Dorsolateral prefrontal cortex (tissue), 120 donors: ENCODE measurements at regions of chr16 and their contacts with region 1.

Region 1: GRCh38 chr16:30761928-30762810 is at the starts of genes CFAP119 and RNF40:
- DNase-seq: peak; percentile 92 to 98 (median 97)
- H3K4me3 ChIP-seq: peak within 1 kb of the TSS; percentile 66 to 99 (median 90)
- H3K27ac ChIP-seq: peak within 1 kb of the TSS in 58 of 59 donors; percentile 36 to 96 (median 86)
- H3K27me3 ChIP-seq: no peaks in the 10 kb centered on the region
- CTCF ChIP-seq: peak in 33 of 56 donors; percentile 4 to 48 (median 22)
- total RNA-seq, gene CFAP119: 3.6 to 27.3 (median 12.7) TPM
- total RNA-seq, gene RNF40: 72.0 to 128 (median 95.4) TPM

Region 2: DNA sequence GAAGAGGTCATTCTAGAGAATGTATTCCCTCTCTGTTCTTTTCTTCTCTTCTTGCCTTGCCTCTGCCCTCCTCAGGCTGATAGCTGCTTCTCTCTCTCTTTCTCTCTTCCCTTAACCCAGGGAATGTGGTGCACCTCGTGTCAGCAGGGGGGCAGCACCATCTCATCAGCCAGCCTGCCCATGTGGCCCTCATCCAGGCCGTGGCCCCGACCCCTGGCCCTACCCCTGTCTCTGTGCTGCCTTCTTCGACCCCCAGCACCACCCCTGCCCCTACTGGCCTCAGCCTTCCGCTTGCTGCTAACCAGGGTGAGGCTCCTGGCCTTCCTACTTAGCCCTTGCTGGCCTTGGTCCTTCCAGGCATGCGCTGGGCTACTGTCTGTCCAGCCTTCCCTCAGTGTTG is 39.7 kb before region 1 on chr16:
- intact Hi-C with region 1: loop called in 1 of 2 experiments (anchors 1 kb)
- DNase-seq: no peak
- H3K4me3 ChIP-seq: no peak overlapping the region
- H3K27ac ChIP-seq: no peak overlapping the region
- H3K27me3 ChIP-seq: no peaks in the 10 kb centered on the region
- CTCF ChIP-seq: peak in 1 of 56 donors; percentile 5

Region 3: GRCh38 chr16:30747799-30748634 is 14.2 kb before region 1 on chr16 and contains the start of gene PHKG2:
- intact Hi-C with region 1: loop called (anchors 2 kb)
- DNase-seq: peak; percentile 98 to 100 (median 99)
- H3K4me3 ChIP-seq: peak within 1 kb of the TSS; percentile 58 to 97 (median 80)
- H3K27ac ChIP-seq: peak within 1 kb of the TSS in 55 of 59 donors; percentile 3 to 88 (median 75)
- H3K27me3 ChIP-seq: no peaks in the 10 kb centered on the region
- CTCF ChIP-seq: peak in 33 of 56 donors; percentile 7 to 61 (median 34)
- total RNA-seq, gene PHKG2: 25.1 to 55.2 (median 38.8) TPM